Heart left ventricle (tissue), 16 donors: ENCODE measurements at regions of chr5 and their contacts with region 1.

Region 1: GRCh38 chr5:136249678-136250266 is 56.8 kb upstream of the SMIM32 start:
- DNase-seq: peak in 4 of 5 donors; percentile 27 to 51 (median 38)
- ATAC-seq: peak; percentile 47 to 64 (median 60)
- H3K4me3 ChIP-seq: no peak overlapping the region
- H3K27ac ChIP-seq: no peak overlapping the region
- H3K4me1 ChIP-seq: no peaks in the 10 kb centered on the region
- H3K27me3 ChIP-seq: peaks cover 0 to 11% (median 0%) of the 10 kb centered on the region in 9 donors
- CTCF ChIP-seq: peak; percentile 61 to 79 (median 69)
- POLR2A ChIP-seq: no peak

Region 2: GRCh38 chr5:136424835-136425584 is 175.2 kb after region 1 on chr5:
- intact Hi-C with region 1: loop called in 9 of 10 experiments (anchors 2 to 10 kb)
- DNase-seq: peak; percentile 42 to 77 (median 51)
- ATAC-seq: peak; percentile 42 to 69 (median 60)
- H3K4me3 ChIP-seq: no peak overlapping the region
- H3K27ac ChIP-seq: no peak overlapping the region
- H3K4me1 ChIP-seq: no peaks in the 10 kb centered on the region
- H3K27me3 ChIP-seq: no peaks in the 10 kb centered on the region
- CTCF ChIP-seq: peak; percentile 34 to 65 (median 58)
- POLR2A ChIP-seq: no peak

Region 3: DNA sequence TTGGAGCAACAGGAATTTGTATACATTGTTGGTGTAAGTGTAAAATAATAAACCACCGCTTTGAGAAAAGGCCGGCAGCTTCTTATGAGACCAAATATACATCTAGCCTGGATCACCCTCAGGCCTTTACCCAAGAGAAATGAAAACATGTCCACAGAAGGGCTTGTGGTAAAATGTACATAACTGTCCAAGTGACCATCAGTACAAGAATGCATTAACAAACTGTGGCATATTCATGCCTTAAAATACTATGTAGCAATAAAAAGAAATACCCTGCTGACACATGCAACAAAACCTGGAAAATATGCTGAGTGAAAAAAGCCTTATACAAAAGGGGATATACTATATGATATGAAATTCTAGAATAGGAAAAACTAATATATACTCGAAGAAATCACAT is 427.4 kb after region 1 on chr5:
- intact Hi-C with region 1: loop called in 1 of 10 experiments (anchors 10 kb)
- DNase-seq: no peak
- ATAC-seq: no peak
- H3K4me3 ChIP-seq: no peak overlapping the region
- H3K27ac ChIP-seq: no peak overlapping the region
- H3K4me1 ChIP-seq: peaks cover 0 to 8% (median 0%) of the 10 kb centered on the region in 12 donors
- H3K27me3 ChIP-seq: peaks cover 0 to 28% (median 0%) of the 10 kb centered on the region in 9 donors
- CTCF ChIP-seq: no peak
- POLR2A ChIP-seq: no peak

Region 4: GRCh38 chr5:136769900-136770684 is 520.3 kb after region 1 on chr5:
- intact Hi-C with region 1: loop called (anchors 1 to 5 kb)
- DNase-seq: peak; percentile 29 to 72 (median 62)
- ATAC-seq: peak; percentile 42 to 86 (median 76)
- H3K4me3 ChIP-seq: no peak overlapping the region
- H3K27ac ChIP-seq: no peak overlapping the region
- H3K4me1 ChIP-seq: no peaks in the 10 kb centered on the region
- H3K27me3 ChIP-seq: peaks cover 0 to 4% (median 0%) of the 10 kb centered on the region in 9 donors
- CTCF ChIP-seq: peak; percentile 51 to 74 (median 66)
- POLR2A ChIP-seq: no peak